HCT116 (cell line): ENCODE measurements at regions of chr14 and their contacts with region 1.

Region 1: GRCh38 chr14:78448164-78449094 is 278.3 kb downstream of the NRXN3 start:
- DNase-seq: peak; percentile 15
- ATAC-seq: peak; percentile 70
- H3K4me3 ChIP-seq: no peak overlapping the region
- H3K27ac ChIP-seq: no peak overlapping the region
- H3K4me1 ChIP-seq: no peaks in the 10 kb centered on the region
- H3K27me3 ChIP-seq: no peaks in the 10 kb centered on the region; the same call in 1 of the 2 replicates
- CTCF ChIP-seq: peak; percentile 37 to 78 (median 69); a peak in 5 of 6 replicates
- POLR2A ChIP-seq: no peak
- RAD21 ChIP-seq: peak; percentile 55

Region 2: DNA sequence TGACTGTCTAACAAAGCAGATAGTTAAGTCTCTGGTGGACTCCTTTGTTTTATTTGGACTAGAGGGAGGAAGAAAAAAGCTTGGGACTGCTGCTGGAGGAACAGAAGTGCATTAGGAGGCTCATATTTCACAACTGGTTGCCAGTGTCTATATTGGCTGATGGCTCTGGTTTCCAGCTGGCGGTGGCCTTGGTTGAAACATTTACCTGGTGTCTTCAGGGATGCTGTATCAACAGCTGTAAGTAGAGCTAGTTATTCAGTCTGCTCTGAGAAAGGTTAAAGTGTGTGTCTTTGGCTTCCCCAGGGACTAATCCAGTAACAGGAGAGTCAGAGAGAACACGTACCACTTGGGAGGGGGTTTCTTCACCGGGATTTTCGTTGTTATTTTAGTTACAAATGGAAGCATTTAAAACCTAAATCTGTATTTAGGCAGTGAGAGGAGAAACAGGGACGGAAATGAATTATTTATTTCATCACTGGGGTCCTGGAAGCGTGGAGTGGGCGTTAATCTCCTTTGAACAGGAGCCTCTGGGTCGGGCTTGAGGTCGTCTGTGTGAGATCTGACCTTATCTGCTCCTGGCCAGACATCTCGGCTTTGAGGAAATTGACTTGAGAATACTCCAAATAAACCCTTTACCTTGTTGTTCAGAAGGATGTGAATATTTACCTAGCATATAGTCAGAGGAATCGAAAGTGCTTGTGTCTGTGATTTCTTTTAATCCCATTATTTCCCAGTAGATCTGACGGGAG is 128.4 kb before region 1 on chr14:
- CTCF ChIA-PET with region 1: no interaction called
- POLR2A ChIA-PET with region 1: no interaction called
- RAD21 ChIA-PET with region 1: no interaction called
- intact Hi-C with region 1: no loop called
- DNase-seq: no peak
- ATAC-seq: no peak
- H3K4me3 ChIP-seq: no peak overlapping the region
- H3K27ac ChIP-seq: no peak overlapping the region
- H3K4me1 ChIP-seq: no peaks in the 10 kb centered on the region
- H3K27me3 ChIP-seq: peaks cover 39% of the 10 kb centered on the region
- CTCF ChIP-seq: no peak
- POLR2A ChIP-seq: no peak
- RAD21 ChIP-seq: no peak

Region 3: GRCh38 chr14:78519856-78520255 is 71.4 kb after region 1 on chr14:
- CTCF ChIA-PET with region 1: no interaction called
- POLR2A ChIA-PET with region 1: no interaction called
- RAD21 ChIA-PET with region 1: no interaction called
- intact Hi-C with region 1: no loop called
- DNase-seq: no peak
- ATAC-seq: no peak
- H3K4me3 ChIP-seq: no peak overlapping the region
- H3K27ac ChIP-seq: no peak overlapping the region
- H3K4me1 ChIP-seq: no peaks in the 10 kb centered on the region
- H3K27me3 ChIP-seq: no peaks in the 10 kb centered on the region
- CTCF ChIP-seq: no peak
- POLR2A ChIP-seq: no peak
- RAD21 ChIP-seq: no peak

Region 4: DNA sequence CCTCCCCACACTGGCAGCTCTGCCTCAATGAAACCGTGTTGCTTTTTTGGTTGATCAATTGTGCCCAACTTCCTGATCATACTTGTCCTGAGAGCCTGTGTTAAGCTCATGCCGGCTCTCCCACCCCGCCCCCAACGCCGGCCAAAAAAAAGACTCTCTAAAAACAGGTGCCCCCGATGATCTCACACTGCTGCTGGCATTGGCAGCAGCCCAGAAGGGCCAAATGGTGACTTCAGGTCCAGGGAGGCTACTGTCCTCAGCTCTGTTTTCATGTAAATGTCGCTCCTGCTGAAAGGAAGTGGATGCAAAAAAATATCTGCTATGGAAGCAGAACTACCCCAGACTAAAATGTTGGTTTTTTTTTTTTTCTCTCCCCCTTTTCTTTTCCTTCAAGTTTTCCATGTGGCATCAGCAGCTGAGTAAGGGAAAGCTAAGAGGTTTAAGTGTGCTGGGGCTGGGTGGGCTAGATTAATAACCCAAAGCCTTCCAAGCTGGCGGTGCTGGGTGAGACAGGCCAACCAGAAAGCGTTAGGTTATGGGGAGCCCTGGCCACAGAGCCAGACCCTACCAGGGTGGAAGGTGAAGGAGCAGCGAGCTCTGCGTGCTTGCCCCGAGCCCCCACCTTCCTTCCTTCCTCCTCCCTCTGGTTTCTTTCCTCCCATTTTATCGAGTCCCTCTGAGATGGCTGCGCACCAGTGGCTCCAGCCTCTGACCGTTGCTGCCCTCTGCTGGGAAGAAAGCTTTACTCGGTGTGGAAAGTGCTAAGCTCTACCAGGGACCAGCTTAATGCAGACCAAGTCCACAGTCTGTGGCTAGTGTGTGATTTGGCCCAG is 117.8 kb after region 1 on chr14:
- CTCF ChIA-PET with region 1: interaction called, 8 read pairs
- POLR2A ChIA-PET with region 1: no interaction called
- RAD21 ChIA-PET with region 1: no interaction called
- intact Hi-C with region 1: loop called (anchors 1 kb)
- DNase-seq: peak; percentile 8
- ATAC-seq: peak; percentile 93
- H3K4me3 ChIP-seq: no peak overlapping the region
- H3K27ac ChIP-seq: no peak overlapping the region
- H3K4me1 ChIP-seq: no peaks in the 10 kb centered on the region
- H3K27me3 ChIP-seq: no peaks in the 10 kb centered on the region
- CTCF ChIP-seq: peak; percentile 25 to 68 (median 63); a peak in 4 of 6 replicates
- POLR2A ChIP-seq: no peak
- RAD21 ChIP-seq: peak; percentile 61

Region 5: DNA sequence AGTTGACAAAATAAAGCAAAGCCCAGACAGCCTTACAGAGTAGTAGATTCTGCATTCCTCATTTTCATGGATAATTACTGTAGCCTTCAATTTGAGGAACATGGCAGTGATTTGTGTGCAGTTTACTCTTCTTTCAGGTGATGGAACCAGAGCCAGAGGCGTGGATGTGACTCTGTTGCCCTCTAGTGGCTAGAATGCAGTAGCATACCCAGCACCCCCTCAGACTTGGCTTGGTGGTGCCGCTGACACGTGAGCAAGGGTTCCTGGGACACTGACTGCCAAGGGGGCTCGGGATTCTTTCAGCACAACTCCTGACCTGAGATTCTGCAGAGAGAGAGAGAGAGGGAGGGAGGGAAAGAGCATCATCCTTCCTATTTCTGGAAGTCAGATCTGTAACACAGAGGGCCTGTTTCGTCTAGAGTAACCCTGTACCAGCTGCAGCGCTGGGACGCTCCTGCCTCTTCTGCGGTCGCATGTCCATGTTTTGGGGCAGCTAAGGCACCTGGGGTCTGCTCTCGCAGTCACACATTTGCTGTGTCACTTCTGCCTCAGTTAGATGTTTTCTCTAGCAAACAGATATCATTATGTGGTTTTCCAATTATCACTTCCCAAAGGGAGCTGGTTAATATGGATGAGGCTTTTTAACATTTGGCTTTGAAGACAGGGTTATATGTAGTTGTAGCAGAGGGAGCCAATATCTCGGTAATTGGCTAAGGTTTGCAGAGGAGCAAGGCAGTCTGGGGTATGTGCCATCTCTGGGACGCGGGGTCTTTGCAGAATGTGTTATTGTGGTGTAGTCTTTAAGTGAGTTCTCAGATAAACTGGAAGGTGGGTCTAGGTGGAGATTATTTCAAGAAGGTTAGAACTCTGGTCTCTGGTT is 149.9 kb after region 1 on chr14:
- CTCF ChIA-PET with region 1: no interaction called
- POLR2A ChIA-PET with region 1: no interaction called
- RAD21 ChIA-PET with region 1: no interaction called
- intact Hi-C with region 1: loop called (anchors 1 kb)
- DNase-seq: peak; percentile 29
- ATAC-seq: peak; percentile 94
- H3K4me3 ChIP-seq: no peak overlapping the region
- H3K27ac ChIP-seq: no peak overlapping the region
- H3K4me1 ChIP-seq: no peaks in the 10 kb centered on the region
- H3K27me3 ChIP-seq: no peaks in the 10 kb centered on the region; the same call in 1 of the 2 replicates
- CTCF ChIP-seq: peak; percentile 46 to 91 (median 90); a peak in 5 of 6 replicates
- POLR2A ChIP-seq: no peak
- RAD21 ChIP-seq: peak; percentile 68

Region 6: GRCh38 chr14:78697341-78697740 is 248.9 kb after region 1 on chr14:
- CTCF ChIA-PET with region 1: no interaction called
- POLR2A ChIA-PET with region 1: no interaction called
- RAD21 ChIA-PET with region 1: no interaction called
- intact Hi-C with region 1: loop called (anchors 5 kb)
- DNase-seq: peak; percentile 3
- ATAC-seq: no peak
- H3K4me3 ChIP-seq: no peak overlapping the region
- H3K27ac ChIP-seq: no peak overlapping the region
- H3K4me1 ChIP-seq: no peaks in the 10 kb centered on the region
- H3K27me3 ChIP-seq: no peaks in the 10 kb centered on the region
- CTCF ChIP-seq: peak in 2 of 3 experiments; percentile 38 to 45; a peak in 4 of 6 replicates
- POLR2A ChIP-seq: no peak
- RAD21 ChIP-seq: peak; percentile 44

Region 7: DNA sequence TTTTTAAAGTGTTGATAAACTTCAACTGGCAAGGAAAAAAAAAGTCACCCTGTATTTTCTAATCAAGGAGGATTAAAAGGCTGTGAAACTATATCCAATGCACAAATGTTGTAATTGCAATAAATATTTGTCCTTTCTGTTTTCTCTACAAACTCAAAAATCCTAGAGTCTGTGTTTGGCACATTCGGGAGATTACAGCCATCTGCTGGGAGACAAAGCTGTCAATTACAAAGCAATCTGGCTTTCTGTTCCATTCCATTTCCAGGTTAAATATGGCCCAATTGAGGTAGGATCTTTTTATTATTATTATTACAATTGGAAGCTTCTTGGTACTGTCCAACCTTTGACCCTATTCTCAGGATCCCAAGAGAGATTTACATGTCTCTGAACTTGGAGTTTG is 1467.0 kb after region 1 on chr14:
- CTCF ChIA-PET with region 1: no interaction called
- POLR2A ChIA-PET with region 1: no interaction called
- RAD21 ChIA-PET with region 1: no interaction called
- intact Hi-C with region 1: no loop called
- DNase-seq: no peak
- ATAC-seq: no peak
- H3K4me3 ChIP-seq: no peak overlapping the region
- H3K27ac ChIP-seq: no peak overlapping the region
- H3K4me1 ChIP-seq: no peaks in the 10 kb centered on the region
- H3K27me3 ChIP-seq: no peaks in the 10 kb centered on the region
- CTCF ChIP-seq: no peak
- POLR2A ChIP-seq: no peak
- RAD21 ChIP-seq: no peak